MCF 10A (cell line): ENCODE measurements at regions of chr20 and their contacts with region 1.

Region 1: DNA sequence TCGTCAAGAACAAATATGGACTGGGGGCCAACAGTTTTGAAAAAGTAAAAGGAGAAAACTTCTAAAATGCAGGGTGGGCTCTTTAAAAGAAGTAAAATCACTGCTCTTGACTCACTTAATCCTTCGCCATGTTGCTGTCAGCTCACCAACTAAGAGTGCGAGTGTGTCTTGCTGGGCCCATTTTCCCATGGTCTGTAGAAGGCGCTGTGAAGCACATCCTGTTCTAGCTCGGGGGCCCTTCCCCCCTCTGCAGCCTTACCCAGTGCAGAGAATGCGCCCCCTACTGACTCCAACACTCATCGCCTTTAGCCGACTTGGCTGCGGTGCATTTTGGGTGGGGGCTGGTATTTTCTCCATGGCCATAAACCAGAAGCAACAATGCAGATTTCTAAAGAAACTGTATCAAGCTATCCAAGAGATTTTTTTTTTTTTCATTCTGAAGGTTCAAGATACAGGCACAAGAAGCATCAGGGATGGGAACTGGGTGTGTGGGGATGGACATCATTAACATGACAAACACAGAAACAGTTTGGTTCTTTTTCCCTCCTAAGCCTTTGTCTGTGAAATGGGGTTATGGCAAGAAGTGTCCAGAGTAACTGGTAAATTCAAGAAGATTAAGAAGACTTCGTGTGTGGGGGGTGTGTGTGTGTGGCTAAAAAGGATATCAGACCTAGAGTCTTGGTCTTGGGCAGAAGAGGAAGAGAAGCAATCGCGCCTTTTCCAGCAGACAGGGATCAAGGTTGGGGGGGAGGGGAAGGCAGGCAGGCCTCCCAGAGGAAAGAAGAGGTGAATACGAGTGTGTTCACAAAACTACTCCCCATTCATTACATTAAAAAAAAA is 1.7 kb downstream of the ADNP start:
- DNase-seq: peak; percentile 96
- H3K4me3 Mint-ChIP-seq: peak overlapping the region; percentile 90
- H3K27ac Mint-ChIP-seq: peak overlapping the region; percentile 73
- H3K4me1 Mint-ChIP-seq: peaks cover 37% of the 10 kb centered on the region
- H3K27me3 Mint-ChIP-seq: no peaks in the 10 kb centered on the region
- CTCF ChIP-seq: peak; percentile 90

Region 2: GRCh38 chr20:50815162-50815989 is 114.1 kb before region 1 on chr20:
- CTCF ChIA-PET with region 1: interaction called, 60 read pairs
- POLR2A ChIA-PET with region 1: interaction called, 12 read pairs
- intact Hi-C with region 1: loop called (anchors 1 kb)
- DNase-seq: no peak
- H3K4me3 Mint-ChIP-seq: no peak overlapping the region
- H3K27ac Mint-ChIP-seq: peak overlapping the region; percentile 52
- H3K4me1 Mint-ChIP-seq: peaks cover 16% of the 10 kb centered on the region
- H3K27me3 Mint-ChIP-seq: no peaks in the 10 kb centered on the region
- CTCF ChIP-seq: no peak

Region 3: DNA sequence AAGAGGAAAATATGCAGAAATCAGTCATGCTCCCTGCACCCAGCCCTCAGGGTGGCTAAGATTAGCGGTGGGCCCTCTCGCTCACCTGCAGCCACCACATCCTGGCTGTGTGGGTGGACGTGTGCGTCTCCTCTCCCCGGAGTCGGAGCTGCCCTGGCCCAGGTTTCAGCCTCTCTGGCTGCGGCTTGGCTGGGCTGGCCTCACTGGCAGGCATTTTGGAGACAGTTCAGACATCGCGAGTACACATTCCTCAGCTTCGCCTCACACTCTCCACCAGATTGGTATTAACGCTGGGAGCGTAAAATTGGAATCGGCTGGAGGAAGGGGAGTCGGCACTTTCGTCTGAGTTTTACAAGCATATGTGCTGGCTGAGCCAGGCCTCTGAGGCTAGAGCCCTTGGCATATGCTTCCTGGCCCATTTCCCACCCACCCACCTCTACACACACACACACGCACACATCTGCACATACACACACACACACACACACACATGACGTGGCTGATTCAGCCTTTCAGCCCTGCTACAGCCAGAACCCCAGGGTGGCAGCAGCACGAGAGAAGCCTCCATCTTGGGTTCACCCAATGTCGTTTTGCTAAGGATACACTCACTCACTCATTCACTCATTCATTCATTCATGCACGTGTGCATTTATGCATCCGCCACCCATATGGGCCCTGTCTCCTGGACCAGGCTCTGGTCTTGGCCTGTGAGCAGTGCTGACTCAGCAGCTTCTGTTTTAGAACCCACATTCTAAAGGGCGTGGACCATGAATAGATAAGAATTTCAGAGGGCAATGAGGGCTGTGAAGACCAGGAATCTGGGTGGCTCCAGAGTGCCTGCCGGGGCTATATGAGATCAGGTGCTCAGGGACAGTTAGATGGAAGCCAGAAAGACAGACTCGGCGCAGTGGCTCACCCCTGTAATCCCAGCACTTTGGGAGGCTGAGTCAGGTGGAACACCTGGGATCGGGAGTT is 91.7 kb before region 1 on chr20:
- CTCF ChIA-PET with region 1: interaction called, 18 read pairs
- POLR2A ChIA-PET with region 1: interaction called, 149 read pairs
- intact Hi-C with region 1: no loop called
- DNase-seq: peak; percentile 74
- H3K4me3 Mint-ChIP-seq: peak overlapping the region; percentile 47
- H3K27ac Mint-ChIP-seq: peak overlapping the region; percentile 93
- H3K4me1 Mint-ChIP-seq: peaks cover 21% of the 10 kb centered on the region
- H3K27me3 Mint-ChIP-seq: no peaks in the 10 kb centered on the region
- CTCF ChIP-seq: no peak

Region 4: DNA sequence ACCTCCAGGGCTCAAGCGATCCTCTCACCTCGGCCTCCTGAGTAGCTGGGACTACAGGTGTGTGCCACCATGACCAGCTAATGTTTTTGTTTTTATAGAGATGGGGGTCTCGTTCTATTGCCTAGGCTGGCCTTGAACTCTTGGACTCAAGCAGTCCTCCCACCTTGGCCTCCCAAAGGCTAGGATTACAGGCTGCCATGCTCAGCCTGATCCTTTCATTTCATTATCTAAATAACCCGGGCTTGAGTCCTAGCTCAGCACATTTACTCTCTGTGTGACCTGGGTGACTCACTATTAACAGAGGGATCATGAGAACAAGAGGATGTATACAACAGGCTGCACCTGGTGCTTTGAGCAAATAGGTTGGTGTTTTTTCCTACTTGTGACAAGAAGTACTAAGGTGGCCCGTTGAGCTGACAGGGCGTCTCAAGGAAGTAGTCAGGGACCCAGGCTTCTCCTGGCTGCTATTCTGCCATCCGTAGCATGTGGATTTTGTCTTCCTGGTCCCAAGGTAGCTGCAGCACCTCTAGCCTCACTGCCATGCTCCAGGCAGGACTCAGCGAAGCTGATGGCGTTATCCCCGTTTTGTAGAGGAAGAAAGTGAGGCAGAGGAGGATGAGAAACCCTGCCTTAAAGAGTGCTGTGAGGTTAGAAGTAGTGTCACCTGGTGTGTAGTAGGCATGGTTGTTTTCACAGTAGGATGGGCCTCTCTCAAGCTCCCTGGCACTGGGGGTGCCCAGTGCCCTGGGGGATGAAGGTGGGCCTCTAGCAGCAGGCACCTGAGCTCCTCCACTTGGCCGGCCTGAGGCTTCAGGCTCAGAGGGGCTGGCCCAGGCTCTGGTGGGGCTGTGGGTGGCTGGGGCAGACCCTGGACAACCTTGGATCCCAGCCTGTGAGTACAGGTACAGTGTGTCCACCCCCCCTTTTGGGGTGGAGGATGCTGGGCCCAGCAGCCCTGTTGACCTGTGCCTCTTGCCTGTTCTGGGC is 60.7 kb before region 1 on chr20:
- CTCF ChIA-PET with region 1: interaction called, 7 read pairs
- POLR2A ChIA-PET with region 1: interaction called, 13 read pairs
- intact Hi-C with region 1: no loop called
- DNase-seq: no peak
- H3K4me3 Mint-ChIP-seq: no peak overlapping the region
- H3K27ac Mint-ChIP-seq: no peak overlapping the region
- H3K4me1 Mint-ChIP-seq: peaks cover 19% of the 10 kb centered on the region
- H3K27me3 Mint-ChIP-seq: no peaks in the 10 kb centered on the region
- CTCF ChIP-seq: no peak

Region 5: DNA sequence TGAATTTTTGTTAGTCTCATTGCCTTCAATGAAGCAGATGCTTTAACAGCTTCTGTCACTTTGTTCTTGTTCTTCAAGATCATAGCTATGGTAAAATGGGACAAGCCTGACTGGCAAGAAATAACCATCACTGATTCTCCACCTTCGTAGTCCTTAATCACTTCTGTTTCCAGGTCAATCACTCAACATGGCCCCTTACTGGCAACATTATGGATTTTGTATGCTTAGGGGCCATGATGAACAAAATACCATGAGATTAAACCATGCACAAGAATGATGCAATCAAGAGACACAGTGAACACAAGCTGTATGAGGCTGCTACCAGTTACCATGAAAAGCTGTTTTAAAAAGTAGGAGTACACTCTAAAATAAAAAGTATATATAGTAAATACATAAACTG is 31.0 kb before region 1 on chr20:
- CTCF ChIA-PET with region 1: interaction called, 12 read pairs
- POLR2A ChIA-PET with region 1: interaction called, 5 read pairs
- intact Hi-C with region 1: no loop called
- DNase-seq: no peak
- H3K4me3 Mint-ChIP-seq: no peak overlapping the region
- H3K27ac Mint-ChIP-seq: peak overlapping the region; percentile 48
- H3K4me1 Mint-ChIP-seq: peaks cover 6% of the 10 kb centered on the region
- H3K27me3 Mint-ChIP-seq: no peaks in the 10 kb centered on the region
- CTCF ChIP-seq: no peak

Region 6: DNA sequence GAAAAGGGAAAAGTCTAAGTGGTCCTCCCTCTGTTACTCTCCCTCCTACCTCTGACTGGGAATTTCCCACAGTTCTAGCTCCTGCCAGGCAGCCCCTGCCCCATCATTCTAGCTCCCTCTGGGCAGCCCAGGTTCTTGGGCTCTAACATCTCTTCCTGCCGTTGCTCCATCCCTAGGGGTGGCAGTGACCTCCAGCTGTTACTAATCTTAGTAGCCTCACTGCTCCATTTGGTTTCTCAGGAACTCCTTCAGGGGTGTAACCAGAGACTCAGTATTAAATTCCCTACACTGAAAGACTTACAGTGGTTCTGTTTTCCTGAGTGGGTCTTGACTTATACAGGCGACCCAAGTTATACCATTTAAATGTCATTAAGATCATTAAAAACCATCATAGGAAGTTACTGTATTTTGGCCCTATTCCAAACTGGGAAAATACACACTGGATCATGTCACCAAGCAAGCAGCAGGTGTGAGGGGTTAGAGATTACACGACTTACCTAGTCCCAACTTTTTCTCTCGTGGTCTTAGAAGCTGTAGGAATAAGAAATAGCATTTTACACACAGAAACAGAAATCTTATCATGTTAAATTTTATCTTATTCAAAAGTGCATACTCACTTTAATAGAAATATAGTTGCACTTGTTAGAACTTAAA is 18.7 kb after region 1 on chr20:
- CTCF ChIA-PET with region 1: interaction called, 5 read pairs
- POLR2A ChIA-PET with region 1: interaction called, 10 read pairs
- intact Hi-C with region 1: no loop called
- DNase-seq: no peak
- H3K4me3 Mint-ChIP-seq: no peak overlapping the region
- H3K27ac Mint-ChIP-seq: no peak overlapping the region
- H3K4me1 Mint-ChIP-seq: no peaks in the 10 kb centered on the region
- H3K27me3 Mint-ChIP-seq: no peaks in the 10 kb centered on the region
- CTCF ChIP-seq: no peak

Region 7: GRCh38 chr20:51335329-51335841 is 405.9 kb after region 1 on chr20:
- CTCF ChIA-PET with region 1: no interaction called
- POLR2A ChIA-PET with region 1: no interaction called
- intact Hi-C with region 1: no loop called
- DNase-seq: peak; percentile 92
- H3K4me3 Mint-ChIP-seq: no peak overlapping the region
- H3K27ac Mint-ChIP-seq: peak overlapping the region; percentile 40
- H3K4me1 Mint-ChIP-seq: peaks cover 6% of the 10 kb centered on the region
- H3K27me3 Mint-ChIP-seq: no peaks in the 10 kb centered on the region
- CTCF ChIP-seq: no peak